ENCODE measurements at regions of chr18 and their contacts with region 1.

Region 1: DNA sequence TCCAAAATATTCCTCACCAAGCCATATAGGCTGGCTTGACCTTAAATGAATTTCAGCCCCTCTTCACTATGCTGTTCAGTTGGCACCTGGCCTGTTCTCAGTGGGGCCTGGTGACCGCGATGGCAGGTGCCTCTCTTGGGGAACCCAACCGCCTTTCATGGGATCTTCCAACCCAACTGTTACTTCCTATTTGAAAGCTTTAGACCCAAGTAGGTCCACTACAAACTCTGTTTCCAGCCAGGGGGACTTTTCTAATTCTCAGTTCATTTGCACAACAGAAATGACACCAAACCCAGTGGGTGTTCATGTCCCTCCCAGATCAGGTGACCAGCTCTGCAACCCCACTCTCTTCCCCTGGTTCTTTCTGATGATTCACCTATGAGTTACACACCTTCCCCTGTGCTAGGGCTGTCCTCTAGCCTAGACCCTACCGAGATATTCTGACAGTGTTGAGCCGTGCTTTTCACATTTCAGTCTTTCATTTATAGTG is 35.6 kb upstream of the NDUFV2 start:
- DNase-seq: no peak
- ATAC-seq: peak; percentile 87
- H3K4me3 Mint-ChIP-seq: no peak overlapping the region
- H3K27ac Mint-ChIP-seq: peak overlapping the region; percentile 67
- H3K4me1 Mint-ChIP-seq: peaks cover 23% of the 10 kb centered on the region
- H3K27me3 Mint-ChIP-seq: no peaks in the 10 kb centered on the region
- CTCF ChIP-seq: no peak

Region 2: DNA sequence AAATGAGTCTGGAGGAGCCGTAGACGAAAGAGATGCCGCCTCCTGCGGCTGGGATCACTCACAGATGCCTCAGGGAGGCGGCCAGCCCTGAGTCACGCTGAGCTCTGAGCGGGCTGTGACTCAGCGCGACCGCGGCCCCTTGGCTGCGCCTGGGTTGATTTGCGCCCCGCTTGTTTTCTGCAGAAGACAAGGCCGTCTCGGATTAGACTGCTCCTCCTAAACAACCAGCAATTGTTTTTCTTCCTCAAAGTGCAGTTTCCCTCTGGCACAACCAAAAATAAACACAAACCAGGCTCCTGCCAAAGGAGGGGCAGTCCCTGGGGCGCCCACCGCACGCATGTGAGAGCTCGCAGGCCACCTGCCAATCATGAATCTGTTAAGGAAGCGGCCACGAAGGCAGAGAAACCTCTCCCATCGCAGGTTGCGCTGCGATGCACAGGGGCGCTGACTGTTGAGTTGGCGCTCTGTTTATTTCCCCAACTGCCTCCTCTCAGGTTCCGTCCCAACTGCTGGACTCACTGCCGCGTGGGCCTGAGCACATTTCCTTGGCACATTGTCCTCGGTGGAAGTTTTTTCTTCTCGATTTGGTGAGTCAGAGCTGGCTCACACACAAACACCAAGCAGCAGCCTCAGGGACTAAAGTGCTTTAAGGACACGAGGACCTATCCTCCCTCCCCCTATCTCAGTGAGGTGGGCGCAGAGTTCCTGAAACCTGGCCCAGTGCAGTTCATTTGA is 49.5 kb before region 1 on chr18:
- CTCF ChIA-PET with region 1: no interaction called
- POLR2A ChIA-PET with region 1: no interaction called
- intact Hi-C with region 1: no loop called
- DNase-seq: peak; percentile 90
- ATAC-seq: peak; percentile 98
- H3K4me3 Mint-ChIP-seq: peak overlapping the region; percentile 65
- H3K27ac Mint-ChIP-seq: peak overlapping the region; percentile 81
- H3K4me1 Mint-ChIP-seq: peaks cover 13% of the 10 kb centered on the region
- H3K27me3 Mint-ChIP-seq: peaks cover 2% of the 10 kb centered on the region
- CTCF ChIP-seq: no peak

Region 3: GRCh38 chr18:9082711-9083510 is 16.0 kb after region 1 on chr18:
- CTCF ChIA-PET with region 1: no interaction called
- POLR2A ChIA-PET with region 1: no interaction called
- intact Hi-C with region 1: no loop called
- DNase-seq: peak; percentile 85
- ATAC-seq: peak; percentile 86
- H3K4me3 Mint-ChIP-seq: peak overlapping the region; percentile 55
- H3K27ac Mint-ChIP-seq: peak overlapping the region; percentile 94
- H3K4me1 Mint-ChIP-seq: peaks cover 38% of the 10 kb centered on the region
- H3K27me3 Mint-ChIP-seq: no peaks in the 10 kb centered on the region
- CTCF ChIP-seq: no peak

Region 4: DNA sequence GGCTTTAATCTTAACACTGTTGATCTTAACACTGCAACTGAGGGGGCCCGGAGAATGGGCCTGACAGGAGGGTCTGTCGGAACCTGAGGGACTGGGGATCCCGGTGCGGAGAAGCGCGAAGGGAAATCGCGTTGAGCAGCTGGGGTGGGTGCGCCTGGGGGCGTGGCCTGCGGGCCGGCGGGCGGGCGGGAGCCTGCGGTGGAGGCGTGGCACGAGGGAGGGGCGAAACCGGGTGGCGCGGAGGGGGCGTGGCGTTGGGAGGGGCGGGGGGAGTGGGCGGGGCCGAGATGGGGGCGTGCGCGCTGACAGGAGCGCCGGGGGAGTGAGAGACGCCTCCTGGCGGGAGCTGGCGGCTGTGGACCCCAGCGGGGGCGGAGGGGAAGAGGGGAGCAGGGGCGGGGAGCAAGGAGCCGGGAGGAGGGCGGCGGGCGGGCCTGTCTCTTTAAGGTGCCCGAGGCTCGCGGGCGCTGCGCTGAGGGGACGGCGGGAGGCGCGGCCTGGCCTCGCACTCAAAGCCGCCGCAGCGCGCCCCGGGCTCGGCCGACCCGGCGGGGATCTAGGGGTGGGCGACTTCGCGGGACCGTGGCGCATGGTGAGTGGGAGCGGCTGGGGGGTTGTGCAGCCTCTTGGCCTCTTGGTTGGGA is 267.6 kb after region 1 on chr18 and contains the start of gene TWSG1:
- CTCF ChIA-PET with region 1: no interaction called
- POLR2A ChIA-PET with region 1: no interaction called
- intact Hi-C with region 1: loop called (anchors 5 kb)
- DNase-seq: peak; percentile 95
- ATAC-seq: peak; percentile 88
- H3K4me3 Mint-ChIP-seq: peak within 1 kb of the TSS; percentile 78
- H3K27ac Mint-ChIP-seq: peak within 1 kb of the TSS; percentile 31
- H3K4me1 Mint-ChIP-seq: peaks cover 22% of the 10 kb centered on the region
- H3K27me3 Mint-ChIP-seq: no peaks in the 10 kb centered on the region
- CTCF ChIP-seq: peak; percentile 26
- total RNA-seq, gene TWSG1: 13.3 to 14.9 TPM